ENCODE measurements at regions of chr5 and their contacts with region 1.

Region 1: GRCh38 chr5:149747141-149747832 is 17.2 kb downstream of the PPARGC1B start:
- DNase-seq: no peak
- H3K4me3 ChIP-seq: no peak overlapping the region
- H3K27ac ChIP-seq: no peak overlapping the region
- H3K4me1 ChIP-seq: peaks cover 0 to 3% (median 0%) of the 10 kb centered on the region in 4 experiments; a peak in 2 of 7 replicates
- H3K27me3 ChIP-seq: no peaks in the 10 kb centered on the region
- CTCF ChIP-seq: no peak
- EP300 ChIP-seq: no peak
- POLR2A ChIP-seq: no peak
- RAD21 ChIP-seq: no peak

Region 2: DNA sequence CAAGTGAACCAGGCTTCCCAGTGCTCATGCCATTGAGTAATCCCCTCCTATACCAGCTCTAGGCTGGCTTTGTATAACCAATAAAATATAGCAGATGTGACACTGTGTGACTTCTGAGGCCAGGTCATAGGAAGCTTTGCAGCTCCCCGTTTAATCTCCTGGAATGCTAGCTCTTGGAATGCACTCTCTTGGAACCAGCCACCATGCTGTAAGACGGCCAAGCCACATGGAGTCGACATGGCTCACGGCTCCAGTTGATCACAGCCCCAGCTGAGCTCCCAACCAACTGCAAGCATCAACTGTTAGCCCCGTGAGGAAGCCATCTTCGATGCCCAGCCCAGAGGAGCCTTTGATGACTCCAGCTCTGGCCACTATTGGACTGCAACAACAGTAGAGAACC is 759.0 kb before region 1 on chr5:
- CTCF ChIA-PET with region 1: no interaction called
- POLR2A ChIA-PET with region 1: no interaction called
- DNase-seq: no peak
- H3K4me3 ChIP-seq: no peak overlapping the region
- H3K27ac ChIP-seq: no peak overlapping the region
- H3K4me1 ChIP-seq: peaks cover 0 to 4% (median 1%) of the 10 kb centered on the region in 4 experiments; a peak in 2 of 7 replicates
- H3K27me3 ChIP-seq: no peaks in the 10 kb centered on the region
- CTCF ChIP-seq: no peak
- EP300 ChIP-seq: no peak
- POLR2A ChIP-seq: no peak
- RAD21 ChIP-seq: no peak

Region 3: DNA sequence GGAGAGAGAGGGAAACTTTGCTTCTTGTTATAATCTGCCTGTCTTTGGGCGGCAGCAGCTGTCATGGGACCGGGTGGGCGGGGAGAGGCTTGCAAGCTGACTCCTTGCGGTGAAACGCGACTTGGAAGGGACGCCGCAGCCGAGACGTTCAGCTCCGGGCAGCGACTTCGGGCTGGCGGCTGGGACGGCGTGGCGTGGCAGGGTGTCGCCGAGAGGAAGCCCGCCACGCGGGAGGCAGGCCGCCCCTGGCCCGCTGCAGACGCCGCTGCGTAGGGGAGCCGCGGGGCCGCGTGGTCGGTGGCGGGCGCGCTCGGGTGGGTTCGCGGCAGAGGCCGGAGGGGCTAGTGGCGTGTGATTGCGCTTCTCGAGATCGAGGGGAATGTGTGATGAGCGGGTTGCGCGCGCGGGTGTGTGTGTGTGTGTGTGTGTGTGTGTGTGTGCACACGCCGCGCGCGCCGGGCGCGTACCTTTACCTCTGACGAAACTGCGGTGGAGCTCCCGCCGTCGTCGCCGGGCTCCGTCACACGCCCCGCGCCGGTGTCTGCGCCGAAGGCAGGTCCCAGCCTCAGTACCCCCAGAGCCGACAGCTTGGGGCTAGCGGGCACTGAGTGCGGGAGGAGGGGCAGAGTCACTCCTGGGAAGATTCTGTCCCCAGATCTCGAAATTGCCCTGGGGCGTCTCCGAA is 15.5 kb before region 1 on chr5:
- CTCF ChIA-PET with region 1: interaction called, 12 read pairs
- POLR2A ChIA-PET with region 1: interaction called, 6 read pairs
- DNase-seq: peak; percentile 53 to 68
- H3K4me3 ChIP-seq: peak overlapping the region; percentile 60 to 93 (median 64)
- H3K27ac ChIP-seq: no peak overlapping the region
- H3K4me1 ChIP-seq: peaks cover 2 to 11% (median 4%) of the 10 kb centered on the region in 4 experiments; a peak in 5 of 7 replicates
- H3K27me3 ChIP-seq: peaks cover 0 to 21% (median 12%) of the 10 kb centered on the region in 4 experiments; a peak in 5 of 7 replicates
- CTCF ChIP-seq: no peak
- EP300 ChIP-seq: no peak
- POLR2A ChIP-seq: no peak
- RAD21 ChIP-seq: no peak